ENCODE measurements at regions of chr7 and their contacts with region 1.

Region 1: GRCh38 chr7:104231054-104232046 is 23.5 kb upstream of the ORC5 start:
- DNase-seq: peak; percentile 25 to 70 (median 25)
- ATAC-seq: peak; percentile 80
- H3K4me3 ChIP-seq: no peak overlapping the region
- H3K4me1 ChIP-seq: no peaks in the 10 kb centered on the region
- CTCF ChIP-seq: peak; percentile 79

Region 2: DNA sequence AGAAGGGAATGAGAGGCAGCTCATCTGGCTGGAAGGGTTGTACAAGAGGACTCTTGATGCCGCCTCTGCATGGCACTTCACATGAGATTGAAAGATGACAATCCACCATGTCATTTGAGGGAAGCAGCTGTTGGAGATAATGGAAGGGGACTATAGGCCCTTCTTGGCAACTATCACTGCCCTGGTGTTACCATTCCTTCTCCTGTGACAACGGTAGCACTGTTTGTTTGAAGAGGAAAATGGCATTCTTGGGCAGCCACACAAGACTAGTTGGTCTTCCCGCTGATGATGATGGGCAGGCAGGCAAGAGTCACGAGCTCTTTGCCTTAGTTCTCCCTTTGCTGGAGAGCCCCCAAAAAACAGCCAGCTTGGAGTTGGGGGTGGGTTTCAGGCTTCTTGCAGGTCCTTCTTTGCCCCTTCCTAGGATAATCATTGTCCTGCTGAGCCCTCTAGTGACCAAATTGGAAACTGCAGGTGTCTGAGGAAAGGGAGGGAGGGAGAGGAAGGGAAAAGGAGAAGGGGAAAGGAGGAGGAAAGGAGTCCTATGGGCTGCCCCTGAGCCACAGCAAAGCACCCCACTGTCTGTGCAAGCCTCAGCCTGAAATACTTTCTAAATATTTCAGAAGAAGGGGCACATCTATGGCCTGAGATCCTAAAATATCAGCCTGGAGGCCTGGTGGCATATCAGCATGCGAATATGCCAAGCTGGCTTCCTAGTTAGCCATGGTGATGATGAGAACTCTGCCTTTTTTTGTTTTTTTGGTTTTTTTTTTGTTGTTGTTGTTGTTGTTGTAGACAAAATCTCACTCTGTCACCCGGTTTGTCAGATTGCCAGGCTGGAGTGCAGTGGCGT is 617.0 kb after region 1 on chr7:
- intact Hi-C with region 1: loop called in 1 of 2 experiments (anchors 5 kb)
- DNase-seq: peak in 1 of 3 donors; percentile 78
- ATAC-seq: peak; percentile 66
- H3K4me3 ChIP-seq: no peak overlapping the region
- H3K4me1 ChIP-seq: no peaks in the 10 kb centered on the region
- CTCF ChIP-seq: peak; percentile 67

Measured in mucosa of descending colon (tissue), 3 donors.